Activated CD8-positive, alpha-beta T cell treated with anti-CD3 and anti-CD28 coated beads for 36 hours (primary cell): ENCODE measurements at regions of chr22 and their contacts with region 1.

Region 1: GRCh38 chr22:20523086-20523983 is 15.9 kb downstream of the MED15 start:
- DNase-seq: peak; percentile 62
- ATAC-seq: peak; percentile 22
- H3K4me3 Mint-ChIP-seq: no peak overlapping the region
- H3K27ac Mint-ChIP-seq: peak overlapping the region; percentile 75
- H3K4me1 Mint-ChIP-seq: peaks cover 72% of the 10 kb centered on the region
- H3K27me3 Mint-ChIP-seq: no peaks in the 10 kb centered on the region
- CTCF ChIP-seq: no peak

Region 2: GRCh38 chr22:20449819-20450550 is 73.3 kb before region 1 on chr22:
- CTCF ChIA-PET with region 1: no interaction called
- POLR2A ChIA-PET with region 1: no interaction called
- intact Hi-C with region 1: no loop called
- DNase-seq: no peak
- ATAC-seq: no peak
- H3K4me3 Mint-ChIP-seq: no peak overlapping the region
- H3K27ac Mint-ChIP-seq: no peak overlapping the region
- H3K4me1 Mint-ChIP-seq: no peaks in the 10 kb centered on the region
- H3K27me3 Mint-ChIP-seq: no peaks in the 10 kb centered on the region
- CTCF ChIP-seq: no peak

Region 3: DNA sequence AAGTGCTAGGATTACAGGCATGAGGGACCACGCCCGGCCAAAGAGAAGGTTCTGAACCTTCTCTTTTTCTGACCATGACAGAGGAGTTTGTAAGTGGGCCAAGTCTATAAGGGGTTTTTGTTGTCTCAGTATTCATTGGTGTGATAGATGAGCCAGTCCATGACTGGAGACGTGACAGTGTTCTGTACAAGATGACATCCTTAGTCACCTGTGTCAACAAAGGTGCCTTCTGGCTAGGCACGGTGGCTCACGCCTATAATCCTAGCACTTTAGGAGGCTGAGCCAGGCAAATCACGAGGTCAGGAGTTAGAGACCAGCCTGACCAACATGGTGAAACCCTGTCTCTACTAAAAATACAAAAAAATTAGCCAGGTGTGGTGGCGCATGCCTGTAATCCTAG is 23.6 kb before region 1 on chr22:
- CTCF ChIA-PET with region 1: no interaction called
- POLR2A ChIA-PET with region 1: no interaction called
- intact Hi-C with region 1: no loop called
- DNase-seq: no peak
- ATAC-seq: no peak
- H3K4me3 Mint-ChIP-seq: no peak overlapping the region
- H3K27ac Mint-ChIP-seq: no peak overlapping the region
- H3K4me1 Mint-ChIP-seq: peaks cover 3% of the 10 kb centered on the region
- H3K27me3 Mint-ChIP-seq: no peaks in the 10 kb centered on the region
- CTCF ChIP-seq: no peak

Region 4: GRCh38 chr22:20550821-20551744 is 27.7 kb after region 1 on chr22:
- CTCF ChIA-PET with region 1: interaction called, 6 read pairs
- POLR2A ChIA-PET with region 1: interaction called, 22 read pairs
- intact Hi-C with region 1: no loop called
- DNase-seq: peak; percentile 88
- ATAC-seq: peak; percentile 70
- H3K4me3 Mint-ChIP-seq: peak overlapping the region; percentile 65
- H3K27ac Mint-ChIP-seq: peak overlapping the region; percentile 97
- H3K4me1 Mint-ChIP-seq: peaks cover 84% of the 10 kb centered on the region
- H3K27me3 Mint-ChIP-seq: no peaks in the 10 kb centered on the region
- CTCF ChIP-seq: no peak

Region 5: GRCh38 chr22:20563248-20563906 is 40.0 kb after region 1 on chr22:
- CTCF ChIA-PET with region 1: interaction called, 10 read pairs
- POLR2A ChIA-PET with region 1: interaction called, 4 read pairs
- intact Hi-C with region 1: no loop called
- DNase-seq: peak; percentile 63
- ATAC-seq: peak; percentile 46
- H3K4me3 Mint-ChIP-seq: no peak overlapping the region
- H3K27ac Mint-ChIP-seq: peak overlapping the region; percentile 13
- H3K4me1 Mint-ChIP-seq: peaks cover 69% of the 10 kb centered on the region
- H3K27me3 Mint-ChIP-seq: no peaks in the 10 kb centered on the region
- CTCF ChIP-seq: no peak